Uterus (tissue), 4 donors: ENCODE measurements at regions of chr7 and their contacts with region 1.

Region 1: DNA sequence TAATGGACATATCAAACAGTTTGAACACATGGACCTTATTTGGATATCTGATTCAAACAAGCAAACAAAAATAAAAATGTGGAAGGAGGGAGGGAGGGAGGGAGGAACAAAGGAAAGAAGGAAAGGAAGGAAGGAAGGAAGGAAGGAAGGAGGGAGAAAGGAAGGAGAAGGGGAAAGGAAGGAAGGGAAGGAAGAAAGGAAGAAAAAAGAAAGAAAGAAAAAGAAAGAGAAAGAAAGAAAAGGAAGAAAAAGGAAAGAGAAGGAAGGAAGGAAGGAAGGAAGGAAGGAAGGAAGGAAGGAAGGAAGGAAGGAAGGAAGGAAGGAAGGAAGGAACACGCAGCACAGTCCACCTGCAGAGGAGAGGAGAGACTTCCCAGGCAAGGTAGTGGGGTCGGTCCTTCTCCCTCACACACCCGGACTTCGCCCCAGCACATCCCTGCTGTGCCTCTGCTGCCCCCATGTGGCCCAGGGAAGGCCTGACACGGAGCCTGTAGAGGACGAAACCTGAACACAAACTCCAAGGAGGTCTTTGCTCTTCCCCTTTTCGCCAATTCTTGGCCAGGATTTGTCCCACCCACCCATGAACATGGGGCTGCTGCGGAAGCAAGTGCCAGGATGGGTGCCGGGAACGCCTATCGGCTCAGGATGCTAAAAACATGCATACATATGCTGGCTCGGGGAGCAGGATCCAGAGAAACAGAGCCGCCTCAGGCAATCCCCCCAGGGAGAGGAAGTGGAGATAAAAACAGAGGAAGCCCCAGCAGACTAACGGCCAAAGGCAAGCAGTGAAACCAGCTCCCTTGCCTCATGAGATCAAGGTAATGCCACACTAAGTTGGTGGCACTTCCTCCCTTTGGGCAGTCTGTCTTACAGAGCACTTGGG is 52.3 kb upstream of the DGKI start:
- DNase-seq: peak; percentile 78 to 80
- H3K4me3 ChIP-seq: no peak overlapping the region
- H3K27ac ChIP-seq: peak overlapping the region; percentile 57 to 68
- H3K4me1 ChIP-seq: no peaks in the 10 kb centered on the region
- H3K27me3 ChIP-seq: no peaks in the 10 kb centered on the region
- CTCF ChIP-seq: peak; percentile 90 to 93 (median 92)
- POLR2A ChIP-seq: no peak

Region 2: GRCh38 chr7:137656227-137656849 is 242.7 kb before region 1 on chr7:
- intact Hi-C with region 1: loop called (anchors 10 kb)
- DNase-seq: peak; percentile 78 to 80
- H3K4me3 ChIP-seq: no peak overlapping the region
- H3K27ac ChIP-seq: no peak overlapping the region
- H3K4me1 ChIP-seq: no peaks in the 10 kb centered on the region
- H3K27me3 ChIP-seq: no peaks in the 10 kb centered on the region
- CTCF ChIP-seq: peak; percentile 71 to 85 (median 77)
- POLR2A ChIP-seq: no peak

Region 3: GRCh38 chr7:137731436-137731835 is 167.6 kb before region 1 on chr7:
- intact Hi-C with region 1: no loop called
- DNase-seq: no peak
- H3K4me3 ChIP-seq: no peak overlapping the region
- H3K27ac ChIP-seq: no peak overlapping the region
- H3K4me1 ChIP-seq: no peaks in the 10 kb centered on the region
- H3K27me3 ChIP-seq: no peaks in the 10 kb centered on the region
- CTCF ChIP-seq: no peak
- POLR2A ChIP-seq: no peak

Region 4: GRCh38 chr7:137778511-137778910 is 120.6 kb before region 1 on chr7:
- intact Hi-C with region 1: no loop called
- DNase-seq: no peak
- H3K4me3 ChIP-seq: no peak overlapping the region
- H3K27ac ChIP-seq: no peak overlapping the region
- H3K4me1 ChIP-seq: no peaks in the 10 kb centered on the region
- H3K27me3 ChIP-seq: no peaks in the 10 kb centered on the region
- CTCF ChIP-seq: no peak
- POLR2A ChIP-seq: no peak

Region 5: GRCh38 chr7:138008547-138009349 is 109.7 kb after region 1 on chr7:
- intact Hi-C with region 1: loop called (anchors 2 kb)
- DNase-seq: peak; percentile 45 to 59
- H3K4me3 ChIP-seq: no peak overlapping the region
- H3K27ac ChIP-seq: no peak overlapping the region
- H3K4me1 ChIP-seq: peaks cover 0 to 4% of the 10 kb centered on the region in 2 donors
- H3K27me3 ChIP-seq: no peaks in the 10 kb centered on the region
- CTCF ChIP-seq: peak; percentile 89 to 97 (median 92)
- POLR2A ChIP-seq: no peak

Region 6: DNA sequence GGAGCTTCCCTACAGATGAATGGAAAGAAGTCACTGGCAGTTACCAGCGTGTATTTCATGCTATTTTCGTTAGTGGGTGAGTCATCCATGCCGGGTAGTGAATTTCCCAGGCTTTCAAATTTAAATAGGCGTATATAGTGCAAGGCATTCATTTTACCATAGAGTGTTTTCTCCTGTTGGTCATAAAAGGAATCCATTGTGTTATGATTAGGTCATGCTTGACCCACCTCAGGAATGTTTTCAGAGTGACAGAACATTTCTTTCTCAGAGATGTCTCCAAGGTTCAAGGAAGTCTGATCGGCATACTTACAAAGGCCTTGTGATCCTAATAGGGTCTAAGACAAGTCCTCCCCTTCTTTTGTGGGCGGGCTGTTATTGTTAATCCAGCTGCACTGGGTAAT is 287.9 kb after region 1 on chr7:
- intact Hi-C with region 1: no loop called
- DNase-seq: no peak
- H3K4me3 ChIP-seq: no peak overlapping the region
- H3K27ac ChIP-seq: no peak overlapping the region
- H3K4me1 ChIP-seq: no peaks in the 10 kb centered on the region
- H3K27me3 ChIP-seq: no peaks in the 10 kb centered on the region
- CTCF ChIP-seq: no peak
- POLR2A ChIP-seq: no peak